Panc1 (cell line): ENCODE measurements at regions of chr7 and their contacts with region 1.

Region 1: GRCh38 chr7:102313997-102314780 is 27.5 kb downstream of the SH2B2 start:
- DNase-seq: no peak
- ATAC-seq: no peak
- H3K4me3 ChIP-seq: no peak overlapping the region
- H3K27ac ChIP-seq: no peak overlapping the region
- H3K4me1 ChIP-seq: no peaks in the 10 kb centered on the region
- H3K27me3 ChIP-seq: no peaks in the 10 kb centered on the region
- CTCF ChIP-seq: no peak

Region 2: DNA sequence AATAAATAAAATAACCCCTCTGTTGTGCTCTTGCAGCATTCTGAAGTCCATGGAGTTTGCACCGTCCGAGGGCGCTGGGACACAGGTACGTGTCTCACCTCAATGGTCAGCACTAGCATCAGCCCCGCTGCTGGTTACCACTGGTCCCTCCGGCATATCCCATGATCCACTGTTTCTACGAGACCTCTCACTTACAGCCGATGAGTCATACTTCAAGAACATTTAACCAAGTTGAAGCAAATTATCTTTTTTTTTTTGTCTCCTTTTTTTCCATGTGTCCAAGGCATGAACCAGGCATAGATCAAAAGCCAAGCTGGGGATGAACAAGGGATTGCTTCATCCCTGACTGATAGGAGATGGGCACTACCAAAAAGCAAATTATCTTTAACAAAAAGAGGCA is 120.4 kb before region 1 on chr7:
- CTCF ChIA-PET with region 1: no interaction called
- POLR2A ChIA-PET with region 1: interaction called, 27 read pairs
- in situ Hi-C with region 1: no loop called
- intact Hi-C with region 1: no loop called
- DNase-seq: no peak
- ATAC-seq: no peak
- H3K4me3 ChIP-seq: no peak overlapping the region
- H3K27ac ChIP-seq: no peak overlapping the region
- H3K4me1 ChIP-seq: no peaks in the 10 kb centered on the region
- H3K27me3 ChIP-seq: no peaks in the 10 kb centered on the region
- CTCF ChIP-seq: no peak

Region 3: DNA sequence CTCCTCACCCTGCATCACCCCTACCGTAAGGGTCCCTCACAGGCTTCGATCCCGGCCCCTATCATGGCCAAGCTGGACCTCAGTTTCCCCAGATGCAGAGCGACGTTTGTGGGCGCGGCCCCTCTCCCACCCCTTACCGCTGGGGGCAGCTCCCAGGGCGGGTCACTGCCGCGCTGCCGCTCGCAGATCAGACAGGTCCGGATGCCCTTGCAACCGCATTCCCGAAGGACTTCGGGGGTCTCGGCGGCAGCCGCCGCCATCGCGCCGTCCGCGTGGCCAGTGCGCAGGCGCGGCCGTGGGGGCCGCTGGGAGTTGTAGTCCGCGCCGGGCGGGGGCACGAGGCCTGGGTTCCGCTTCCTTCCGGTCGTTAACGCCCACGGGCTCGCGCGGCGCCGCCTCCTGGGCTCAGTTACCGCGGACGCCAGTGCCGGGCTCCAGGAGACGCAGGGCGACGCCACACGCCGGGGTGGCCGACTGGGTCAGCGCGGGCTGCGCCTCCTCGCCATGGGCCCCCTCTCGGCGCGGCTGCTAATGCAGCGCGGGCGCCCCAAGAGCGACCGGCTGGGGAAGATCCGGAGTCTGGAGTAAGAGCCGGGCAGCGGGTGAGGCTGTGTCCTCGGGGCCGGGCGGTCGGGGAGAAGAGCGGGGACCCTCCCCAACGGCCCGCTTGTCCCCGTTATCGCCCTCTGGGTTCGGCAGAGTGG is 150.5 kb after region 1 on chr7 and contains the starts of genes ALKBH4 and LRWD1:
- CTCF ChIA-PET with region 1: no interaction called
- POLR2A ChIA-PET with region 1: no interaction called
- in situ Hi-C with region 1: no loop called
- intact Hi-C with region 1: no loop called
- DNase-seq: no peak
- ATAC-seq: peak; percentile 96
- H3K4me3 ChIP-seq: peak within 1 kb of the TSS; percentile 91 to 100
- H3K27ac ChIP-seq: peak within 1 kb of the TSS; percentile 97
- H3K4me1 ChIP-seq: peaks cover 7% of the 10 kb centered on the region
- H3K27me3 ChIP-seq: no peaks in the 10 kb centered on the region
- CTCF ChIP-seq: no peak
- total RNA-seq, gene ALKBH4: 19.0 TPM
- total RNA-seq, gene LRWD1: 55.8 TPM